GM10248 (cell line): ENCODE measurements at regions of chr14 and their contacts with region 1.

Region 1: GRCh38 chr14:22994762-22995275 is 12.5 kb upstream of the AJUBA start:
- DNase-seq: peak; percentile 45
- CTCF ChIP-seq: peak; percentile 63

Region 2: DNA sequence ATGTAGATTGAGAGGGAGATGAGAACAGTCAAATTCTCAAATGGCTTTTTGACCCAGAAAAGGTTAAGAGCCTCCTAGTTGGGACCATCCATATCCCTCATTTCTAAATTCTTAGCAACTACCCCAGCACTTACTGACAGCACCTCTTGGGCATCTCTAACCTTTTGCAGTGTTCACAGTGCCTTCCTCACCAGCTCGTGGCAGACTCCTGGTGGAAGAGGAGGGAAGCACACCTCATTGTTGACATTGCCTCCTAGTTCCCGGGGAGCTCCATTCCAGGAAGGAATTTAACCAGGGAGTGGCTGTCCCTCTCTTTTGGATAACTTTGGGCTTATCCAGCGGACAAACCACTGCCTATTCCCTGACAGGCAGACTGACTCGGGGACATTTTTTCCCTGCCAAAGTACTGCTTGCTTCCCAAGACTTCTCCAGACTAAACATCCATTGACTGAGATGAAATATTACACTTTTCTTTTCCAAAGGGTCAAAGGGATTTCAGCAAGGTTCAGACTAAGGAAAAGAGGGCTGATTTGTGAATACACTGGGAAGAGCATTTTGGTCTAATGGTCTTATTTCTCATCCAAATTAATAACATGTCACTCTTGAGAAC is 341.7 kb before region 1 on chr14:
- CTCF ChIA-PET with region 1: no interaction called
- POLR2A ChIA-PET with region 1: no interaction called
- DNase-seq: peak; percentile 68
- CTCF ChIP-seq: peak; percentile 81

Region 3: GRCh38 chr14:23006544-23007419 is 12.0 kb after region 1 on chr14:
- CTCF ChIA-PET with region 1: interaction called, 91 read pairs
- POLR2A ChIA-PET with region 1: interaction called, 4 read pairs
- DNase-seq: peak; percentile 97
- CTCF ChIP-seq: no peak

Region 4: GRCh38 chr14:23025151-23025814 is 30.5 kb after region 1 on chr14:
- CTCF ChIA-PET with region 1: interaction called, 14 read pairs
- POLR2A ChIA-PET with region 1: no interaction called
- DNase-seq: no peak
- CTCF ChIP-seq: no peak

Region 5: GRCh38 chr14:23076785-23077408 is 82.1 kb after region 1 on chr14:
- CTCF ChIA-PET with region 1: interaction called, 10 read pairs
- POLR2A ChIA-PET with region 1: no interaction called
- DNase-seq: no peak
- CTCF ChIP-seq: peak; percentile 47